OCI-LY7 (cell line): ENCODE measurements at regions of chr13 and their contacts with region 1.

Region 1: DNA sequence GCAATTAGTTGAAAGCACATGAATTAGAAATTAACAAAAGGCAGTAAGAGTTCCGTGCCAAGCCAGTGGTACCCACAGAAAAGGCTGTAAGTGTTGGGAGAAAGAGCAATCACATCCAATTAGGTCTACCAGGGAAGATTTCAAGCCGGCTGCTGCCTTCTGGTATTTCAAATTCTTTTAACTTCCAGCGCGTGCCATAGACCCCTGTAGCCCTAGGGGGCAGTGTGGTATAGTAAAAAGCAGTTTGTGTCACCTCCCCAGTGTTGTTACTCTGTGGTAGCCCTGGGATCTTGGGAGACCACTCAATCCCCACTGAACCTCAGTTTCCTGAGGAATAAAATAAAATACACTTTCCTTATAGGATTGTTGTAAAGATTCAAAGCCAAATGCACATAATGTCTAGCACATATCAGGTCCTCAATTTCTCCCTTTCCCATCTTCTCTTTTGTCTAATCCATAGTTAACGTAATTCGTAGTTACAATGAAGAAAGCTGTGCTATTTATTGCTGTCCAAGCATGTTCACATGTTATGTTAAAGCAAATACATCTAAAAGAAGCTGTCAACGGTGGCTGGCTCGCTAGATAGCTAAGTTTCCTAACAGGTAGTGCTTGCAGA is 230.2 kb downstream of the TDRD3 start:
- DNase-seq: peak; percentile 37
- H3K4me3 ChIP-seq: no peak overlapping the region
- H3K27ac ChIP-seq: no peak overlapping the region
- H3K4me1 ChIP-seq: no peaks in the 10 kb centered on the region
- CTCF ChIP-seq: peak; percentile 82

Region 2: GRCh38 chr13:60112771-60113170 is 514.4 kb before region 1 on chr13:
- CTCF ChIA-PET with region 1: no interaction called
- POLR2A ChIA-PET with region 1: no interaction called
- intact Hi-C with region 1: no loop called
- DNase-seq: no peak
- H3K4me3 ChIP-seq: no peak overlapping the region
- H3K27ac ChIP-seq: no peak overlapping the region
- H3K4me1 ChIP-seq: no peaks in the 10 kb centered on the region
- CTCF ChIP-seq: no peak

Region 3: GRCh38 chr13:61410669-61411297 is 783.6 kb after region 1 on chr13:
- CTCF ChIA-PET with region 1: no interaction called
- POLR2A ChIA-PET with region 1: no interaction called
- intact Hi-C with region 1: loop called (anchors 5 kb)
- DNase-seq: peak; percentile 12
- H3K4me3 ChIP-seq: no peak overlapping the region
- H3K27ac ChIP-seq: no peak overlapping the region
- H3K4me1 ChIP-seq: no peaks in the 10 kb centered on the region
- CTCF ChIP-seq: peak; percentile 80